T-cell (primary cell): ENCODE measurements at regions of chr12 and their contacts with region 1.

Region 1: DNA sequence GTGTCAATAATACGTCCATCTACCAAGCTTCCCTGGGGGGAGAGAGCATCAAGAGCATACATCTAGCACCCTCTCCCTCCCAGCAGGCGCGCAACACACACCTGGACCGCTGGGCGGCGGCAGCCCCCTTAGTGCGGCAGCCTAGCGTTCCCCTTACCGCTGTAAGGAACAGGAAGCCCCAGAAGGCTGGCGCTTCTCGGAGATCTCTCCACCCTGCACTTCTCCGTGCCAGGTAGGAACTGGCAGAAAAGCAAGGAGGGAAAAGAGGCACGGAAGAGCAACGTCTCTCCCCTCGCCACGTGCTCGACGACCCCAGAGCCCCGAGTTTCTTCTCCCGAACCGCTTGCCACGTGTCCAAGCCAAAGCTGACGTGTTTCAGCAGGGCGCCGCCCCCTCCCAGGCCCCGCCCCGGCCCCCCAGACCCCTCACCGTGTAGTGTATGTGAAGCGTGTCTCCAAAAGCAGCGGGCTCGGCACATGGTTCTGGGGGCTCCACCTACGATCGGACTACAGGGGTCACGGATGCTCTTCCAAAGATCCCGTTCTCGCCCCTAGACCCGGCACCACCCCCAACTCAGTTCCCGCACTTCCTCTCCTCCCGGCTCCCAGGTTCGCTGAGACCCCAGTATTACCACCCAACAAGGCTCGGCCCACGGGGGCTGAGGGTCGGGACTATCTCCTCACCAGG is 532 bp downstream of the FKBP11 start:
- DNase-seq: peak; percentile 64 to 87 (median 79)
- ATAC-seq: peak; percentile 78 to 83 (median 80)
- H3K4me3 ChIP-seq: peak overlapping the region; percentile 93 to 100
- H3K4me3 Mint-ChIP-seq: peak overlapping the region; percentile 88 to 96 (median 95)
- H3K27ac ChIP-seq: peak overlapping the region; percentile 97
- H3K27ac Mint-ChIP-seq: peak overlapping the region; percentile 90 to 92
- H3K4me1 ChIP-seq: peaks cover 8 to 44% of the 10 kb centered on the region in 2 experiments
- H3K4me1 Mint-ChIP-seq: peaks cover 36 to 58% (median 56%) of the 10 kb centered on the region in 3 donors
- H3K27me3 ChIP-seq: no peaks in the 10 kb centered on the region
- H3K27me3 Mint-ChIP-seq: no peaks in the 10 kb centered on the region

Region 2: DNA sequence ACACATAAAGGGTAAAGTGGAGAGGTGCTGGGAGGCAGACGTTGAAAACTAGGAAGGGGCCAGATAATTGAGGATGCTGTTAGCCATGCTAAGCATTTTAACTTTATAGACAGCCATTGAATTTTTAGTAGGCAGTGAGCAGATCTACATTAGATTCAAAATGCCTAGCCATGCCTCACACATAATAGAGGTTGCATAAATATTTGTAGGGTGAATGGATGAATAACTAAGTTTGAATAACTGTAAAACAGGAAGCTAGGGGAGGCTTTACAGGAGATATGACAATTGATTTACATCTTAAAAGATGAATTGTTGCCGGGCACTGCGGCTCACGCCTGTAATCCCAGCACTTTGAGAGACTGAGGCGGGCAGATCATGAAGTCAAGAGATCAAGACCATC is 196.0 kb before region 1 on chr12:
- CTCF ChIA-PET with region 1: no interaction called
- POLR2A ChIA-PET with region 1: interaction called in 1 of 2 experiments, 15 read pairs
- DNase-seq: no peak
- ATAC-seq: no peak
- H3K4me3 ChIP-seq: no peak overlapping the region
- H3K4me3 Mint-ChIP-seq: no peak overlapping the region
- H3K27ac ChIP-seq: no peak overlapping the region
- H3K27ac Mint-ChIP-seq: no peak overlapping the region
- H3K4me1 ChIP-seq: no peaks in the 10 kb centered on the region
- H3K4me1 Mint-ChIP-seq: no peaks in the 10 kb centered on the region
- H3K27me3 ChIP-seq: peaks cover 0 to 5% of the 10 kb centered on the region in 2 experiments
- H3K27me3 Mint-ChIP-seq: peaks cover 0 to 6% of the 10 kb centered on the region in 2 donors

Region 3: GRCh38 chr12:48936379-48936979 is 11.7 kb after region 1 on chr12:
- CTCF ChIA-PET with region 1: interaction called, 5 to 30 read pairs
- POLR2A ChIA-PET with region 1: interaction called, 3 to 4 read pairs
- DNase-seq: peak; percentile 54 to 91 (median 81)
- ATAC-seq: peak; percentile 56 to 75 (median 65)
- H3K4me3 ChIP-seq: no peak overlapping the region
- H3K4me3 Mint-ChIP-seq: no peak overlapping the region
- H3K27ac ChIP-seq: no peak overlapping the region
- H3K27ac Mint-ChIP-seq: peak overlapping the region; percentile 44 to 76
- H3K4me1 ChIP-seq: peaks cover 2 to 45% of the 10 kb centered on the region in 2 experiments
- H3K4me1 Mint-ChIP-seq: peaks cover 29 to 39% (median 35%) of the 10 kb centered on the region in 3 donors
- H3K27me3 ChIP-seq: no peaks in the 10 kb centered on the region
- H3K27me3 Mint-ChIP-seq: no peaks in the 10 kb centered on the region